PC-3 (cell line): ENCODE measurements at regions of chr21 and their contacts with region 1.

Region 1: GRCh38 chr21:22679207-22679606 is 1681.0 kb downstream of the NCAM2 start:
- DNase-seq: no peak
- ATAC-seq: no peak
- H3K4me3 ChIP-seq: no peak overlapping the region
- H3K27ac ChIP-seq: no peak overlapping the region
- H3K4me1 ChIP-seq: no peaks in the 10 kb centered on the region
- H3K27me3 ChIP-seq: no peaks in the 10 kb centered on the region
- CTCF ChIP-seq: no peak

Region 2: DNA sequence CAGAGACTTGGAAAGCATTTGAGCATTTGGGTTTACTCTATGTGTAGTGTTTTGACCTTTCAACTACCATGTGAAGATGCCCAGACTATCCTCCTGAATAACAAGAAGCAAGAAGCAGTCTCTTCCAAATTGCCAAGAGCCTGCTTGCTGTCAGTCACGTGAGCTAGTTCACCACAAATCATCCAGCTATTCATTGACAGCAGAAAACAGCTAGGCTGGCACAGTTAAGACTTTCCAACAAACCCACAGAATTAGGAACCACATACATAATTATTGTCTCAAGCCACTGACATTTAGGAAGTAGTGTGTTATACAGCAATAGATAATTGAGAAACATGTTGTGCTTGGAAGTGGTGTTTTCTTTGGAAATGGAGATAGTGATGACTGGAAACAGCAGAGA is 29.0 kb before region 1 on chr21:
- CTCF ChIA-PET with region 1: no interaction called
- POLR2A ChIA-PET with region 1: no interaction called
- intact Hi-C with region 1: no loop called
- DNase-seq: no peak
- ATAC-seq: no peak
- H3K4me3 ChIP-seq: no peak overlapping the region
- H3K27ac ChIP-seq: no peak overlapping the region
- H3K4me1 ChIP-seq: no peaks in the 10 kb centered on the region
- H3K27me3 ChIP-seq: no peaks in the 10 kb centered on the region
- CTCF ChIP-seq: no peak

Region 3: GRCh38 chr21:22728091-22728490 is 48.9 kb after region 1 on chr21:
- CTCF ChIA-PET with region 1: no interaction called
- POLR2A ChIA-PET with region 1: no interaction called
- intact Hi-C with region 1: no loop called
- DNase-seq: peak; percentile 3
- ATAC-seq: no peak
- H3K4me3 ChIP-seq: no peak overlapping the region
- H3K27ac ChIP-seq: no peak overlapping the region
- H3K4me1 ChIP-seq: no peaks in the 10 kb centered on the region
- H3K27me3 ChIP-seq: no peaks in the 10 kb centered on the region
- CTCF ChIP-seq: no peak

Region 4: GRCh38 chr21:22763442-22763841 is 84.2 kb after region 1 on chr21:
- CTCF ChIA-PET with region 1: no interaction called
- POLR2A ChIA-PET with region 1: interaction called, 12 read pairs
- intact Hi-C with region 1: no loop called
- DNase-seq: no peak
- ATAC-seq: no peak
- H3K4me3 ChIP-seq: no peak overlapping the region
- H3K27ac ChIP-seq: no peak overlapping the region
- H3K4me1 ChIP-seq: no peaks in the 10 kb centered on the region; the same call in 1 of the 2 replicates
- H3K27me3 ChIP-seq: no peaks in the 10 kb centered on the region
- CTCF ChIP-seq: no peak